ENCODE measurements at regions of chr17 and their contacts with region 1.

Region 1: DNA sequence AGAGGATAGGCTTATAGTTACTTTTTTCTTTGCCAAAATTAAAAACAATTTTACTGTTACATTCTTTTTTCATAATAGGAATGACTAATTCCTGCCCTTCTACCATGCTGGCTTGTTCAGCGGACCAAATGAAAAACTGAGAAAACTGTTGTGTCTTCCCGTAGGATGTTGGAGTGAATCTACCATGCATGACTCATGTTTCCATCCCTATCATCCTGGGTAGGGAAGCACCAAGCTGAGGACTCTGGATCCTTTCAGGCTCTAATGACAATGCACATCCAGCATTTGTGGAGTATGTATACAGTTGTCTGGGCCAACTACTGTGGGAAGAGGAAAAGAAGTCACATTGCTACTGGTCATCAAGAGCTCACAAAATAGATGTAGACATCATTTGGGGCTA is 41.1 kb upstream of the DHX8 start:
- DNase-seq: no peak
- ATAC-seq: no peak
- H3K4me3 ChIP-seq: no peak overlapping the region
- H3K4me3 Mint-ChIP-seq: no peak overlapping the region
- H3K27ac ChIP-seq: no peak overlapping the region
- H3K27ac Mint-ChIP-seq: no peak overlapping the region
- H3K4me1 ChIP-seq: no peaks in the 10 kb centered on the region
- H3K4me1 Mint-ChIP-seq: no peaks in the 10 kb centered on the region
- H3K27me3 ChIP-seq: peaks cover 0 to 12% of the 10 kb centered on the region in 2 experiments
- H3K27me3 Mint-ChIP-seq: peaks cover 5% of the 10 kb centered on the region in 2 donors

Region 2: GRCh38 chr17:43428524-43428923 is 14.2 kb before region 1 on chr17:
- CTCF ChIA-PET with region 1: no interaction called
- POLR2A ChIA-PET with region 1: interaction called in 1 of 2 experiments, 10 read pairs
- DNase-seq: no peak
- ATAC-seq: no peak
- H3K4me3 ChIP-seq: no peak overlapping the region
- H3K4me3 Mint-ChIP-seq: no peak overlapping the region
- H3K27ac ChIP-seq: no peak overlapping the region
- H3K27ac Mint-ChIP-seq: no peak overlapping the region
- H3K4me1 ChIP-seq: no peaks in the 10 kb centered on the region
- H3K4me1 Mint-ChIP-seq: no peaks in the 10 kb centered on the region
- H3K27me3 ChIP-seq: peaks cover 0 to 16% of the 10 kb centered on the region in 2 experiments
- H3K27me3 Mint-ChIP-seq: peaks cover 14 to 21% of the 10 kb centered on the region in 2 donors